ENCODE measurements at regions of chr2 and their contacts with region 1.

Region 1: DNA sequence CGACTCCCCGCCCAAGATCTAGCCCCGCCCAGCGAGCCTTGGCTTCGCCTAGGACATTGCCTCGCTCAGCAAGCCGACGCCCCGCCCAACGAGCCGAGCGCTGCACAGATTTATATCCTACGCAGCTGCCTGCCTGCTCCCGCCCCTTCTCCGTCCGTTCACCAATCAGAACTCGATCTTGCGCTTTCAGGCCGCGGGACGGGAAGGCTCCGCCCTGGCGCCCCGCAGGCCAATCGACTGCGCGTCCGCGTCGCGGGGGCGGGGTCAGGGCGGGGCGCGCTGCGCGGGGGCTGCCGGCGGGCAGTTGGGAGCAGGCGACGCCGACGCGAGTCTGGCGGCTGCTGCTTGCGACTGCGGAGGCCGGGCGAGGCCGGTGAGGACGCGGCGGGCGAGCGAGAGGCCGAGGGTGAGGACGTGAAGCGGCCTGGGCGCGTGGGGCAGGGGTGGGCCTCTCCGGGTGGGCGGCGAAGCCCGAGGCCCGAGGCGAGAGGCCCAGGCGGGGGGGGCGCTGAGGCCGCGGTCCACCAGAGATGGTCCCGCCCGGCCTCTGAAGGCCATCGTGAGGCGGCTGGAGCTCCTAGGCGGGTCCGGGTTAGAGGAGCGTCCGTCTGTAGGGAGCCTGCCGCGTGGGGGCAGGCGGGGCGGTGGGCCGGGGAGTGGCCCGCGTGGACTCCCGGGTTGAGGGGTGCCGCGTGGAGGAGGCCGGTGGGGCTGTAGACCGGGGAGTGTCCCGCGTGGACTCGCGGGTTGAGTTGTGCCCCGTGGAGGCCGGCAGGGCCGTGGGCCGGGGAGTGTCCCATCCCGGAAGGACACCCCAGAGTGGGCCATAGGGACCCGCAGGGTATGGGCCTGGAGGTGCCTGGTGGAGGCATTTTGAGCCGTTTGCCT is at the start of gene FARP2:
- DNase-seq: peak; percentile 98
- H3K4me3 ChIP-seq: peak within 1 kb of the TSS; percentile 98
- H3K27ac ChIP-seq: peak within 1 kb of the TSS; percentile 30
- H3K4me1 ChIP-seq: peaks cover 33% of the 10 kb centered on the region
- CTCF ChIP-seq: no peak
- total RNA-seq, gene FARP2: 23.2 and 33.6 TPM in 2 replicates

Region 2: GRCh38 chr2:240325016-240325944 is 1030.9 kb before region 1 on chr2:
- CTCF ChIA-PET with region 1: no interaction called
- POLR2A ChIA-PET with region 1: no interaction called
- intact Hi-C with region 1: no loop called
- DNase-seq: no peak
- H3K4me3 ChIP-seq: no peak overlapping the region
- H3K27ac ChIP-seq: no peak overlapping the region
- H3K4me1 ChIP-seq: no peaks in the 10 kb centered on the region
- CTCF ChIP-seq: no peak

Region 3: GRCh38 chr2:241315093-241315878 is 40.9 kb before region 1 on chr2 and contains the start of gene HDLBP:
- CTCF ChIA-PET with region 1: no interaction called
- POLR2A ChIA-PET with region 1: interaction called, 6 read pairs
- intact Hi-C with region 1: loop called (anchors 2 kb)
- DNase-seq: peak; percentile 99
- H3K4me3 ChIP-seq: peak within 1 kb of the TSS; percentile 96
- H3K27ac ChIP-seq: peak within 1 kb of the TSS; percentile 87
- H3K4me1 ChIP-seq: peaks cover 68% of the 10 kb centered on the region
- CTCF ChIP-seq: peak; percentile 79
- total RNA-seq, gene HDLBP: 155 and 176 TPM in 2 replicates

Region 4: DNA sequence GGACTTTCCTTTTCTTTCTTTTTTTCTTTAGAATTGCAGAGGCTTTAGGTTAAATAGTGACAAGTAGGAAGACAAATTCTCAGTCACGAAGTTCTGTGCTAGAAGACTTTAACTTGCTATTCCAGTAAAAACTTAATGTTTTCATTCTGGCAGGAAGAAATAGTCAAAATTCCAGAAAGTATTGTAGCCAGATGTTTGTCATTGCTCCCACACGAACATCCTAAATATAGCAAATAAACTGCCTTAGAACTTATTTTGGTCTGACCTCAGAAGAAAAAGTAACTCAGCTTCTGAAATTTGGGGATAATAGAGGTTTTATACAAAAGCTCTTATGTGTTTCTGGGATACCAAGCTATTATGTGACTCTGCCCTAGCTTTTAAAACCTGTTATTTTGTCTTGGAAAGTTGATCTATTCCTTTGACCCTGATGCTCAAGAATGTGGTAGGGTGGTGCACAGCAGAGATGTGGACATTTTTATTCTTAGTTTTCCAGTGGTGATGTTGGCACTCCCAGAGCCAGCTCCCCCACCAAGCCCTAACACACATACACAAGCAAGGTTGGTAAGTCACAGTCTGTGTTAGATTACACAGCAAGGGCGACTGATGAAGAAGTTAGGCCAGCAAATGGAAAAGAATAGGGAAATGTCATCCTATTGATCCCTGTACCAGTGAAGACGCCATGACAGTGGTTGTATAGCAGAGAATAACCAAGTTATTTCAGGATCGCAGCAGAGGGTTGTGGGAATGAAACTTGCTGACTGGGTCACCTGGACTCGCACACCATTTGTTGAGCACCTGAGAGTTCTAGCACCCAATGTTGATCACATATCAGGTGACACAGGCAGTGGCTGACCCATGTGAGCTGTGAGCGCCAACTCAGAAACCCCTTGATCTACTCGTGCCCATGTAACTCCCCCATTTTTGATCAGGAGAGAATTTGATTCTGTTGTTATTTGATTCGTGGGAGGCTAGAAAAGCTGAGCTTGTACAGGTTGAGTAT is 23.6 kb after region 1 on chr2:
- CTCF ChIA-PET with region 1: no interaction called
- POLR2A ChIA-PET with region 1: interaction called, 11 read pairs
- intact Hi-C with region 1: no loop called
- DNase-seq: no peak
- H3K4me3 ChIP-seq: no peak overlapping the region
- H3K27ac ChIP-seq: no peak overlapping the region
- H3K4me1 ChIP-seq: peaks cover 8% of the 10 kb centered on the region
- CTCF ChIP-seq: no peak

Region 5: GRCh38 chr2:241508240-241509154 is 152.3 kb after region 1 on chr2 and contains the start of gene STK25:
- CTCF ChIA-PET with region 1: no interaction called
- POLR2A ChIA-PET with region 1: no interaction called
- intact Hi-C with region 1: loop called (anchors 2 kb)
- DNase-seq: peak; percentile 98
- H3K4me3 ChIP-seq: peak within 1 kb of the TSS; percentile 98
- H3K27ac ChIP-seq: peak within 1 kb of the TSS; percentile 26
- H3K4me1 ChIP-seq: peaks cover 18% of the 10 kb centered on the region
- CTCF ChIP-seq: no peak
- total RNA-seq, gene STK25: 167 and 201 TPM in 2 replicates

Region 6: GRCh38 chr2:241686649-241687425 is 330.6 kb after region 1 on chr2 and contains the start of gene DTYMK:
- CTCF ChIA-PET with region 1: no interaction called
- POLR2A ChIA-PET with region 1: no interaction called
- intact Hi-C with region 1: loop called (anchors 10 kb)
- DNase-seq: peak; percentile 96
- H3K4me3 ChIP-seq: peak within 1 kb of the TSS; percentile 90
- H3K27ac ChIP-seq: peak within 1 kb of the TSS; percentile 69
- H3K4me1 ChIP-seq: peaks cover 17% of the 10 kb centered on the region
- CTCF ChIP-seq: no peak
- total RNA-seq, gene DTYMK: 104 and 118 TPM in 2 replicates